Esophagus muscularis mucosa (tissue), 4 donors: ENCODE measurements at regions of chr9 and their contacts with region 1.

Region 1: DNA sequence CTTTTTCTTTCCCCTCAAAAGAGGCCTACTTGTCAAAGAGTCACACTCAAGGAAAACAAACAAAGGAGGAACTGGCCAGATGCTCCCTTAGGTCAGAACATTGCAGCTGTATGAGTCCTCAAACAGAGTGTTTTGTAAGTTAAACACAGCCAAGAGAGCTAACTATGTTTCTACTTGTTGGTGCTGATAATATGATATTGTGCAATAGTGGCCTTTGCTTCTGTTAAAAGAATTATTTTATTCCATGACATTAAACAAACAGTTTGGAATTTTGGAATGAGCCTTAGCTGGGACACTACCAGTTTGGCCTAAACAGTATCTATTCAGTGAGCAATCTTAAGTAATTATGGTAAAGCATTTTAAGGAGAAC is 56.0 kb upstream of the TPD52L3 start:
- DNase-seq: no peak
- H3K4me3 ChIP-seq: no peak overlapping the region
- H3K27ac ChIP-seq: peak overlapping the region; percentile 62 to 79 (median 77)
- H3K4me1 ChIP-seq: peaks cover 11 to 32% (median 28%) of the 10 kb centered on the region in 4 donors
- H3K27me3 ChIP-seq: no peaks in the 10 kb centered on the region
- CTCF ChIP-seq: no peak
- EP300 ChIP-seq: no peak
- POLR2A ChIP-seq: no peak

Region 2: GRCh38 chr9:6215562-6215961 is 56.7 kb before region 1 on chr9 and contains the start of gene IL33:
- intact Hi-C with region 1: loop called (anchors 5 kb)
- DNase-seq: no peak
- H3K4me3 ChIP-seq: peak within 1 kb of the TSS; percentile 53 to 64 (median 56)
- H3K27ac ChIP-seq: peak within 1 kb of the TSS; percentile 81 to 87 (median 83)
- H3K4me1 ChIP-seq: peaks cover 16 to 59% (median 40%) of the 10 kb centered on the region in 4 donors
- H3K27me3 ChIP-seq: no peaks in the 10 kb centered on the region
- CTCF ChIP-seq: no peak
- EP300 ChIP-seq: no peak
- POLR2A ChIP-seq: no peak
- total RNA-seq, gene IL33: 63.1 to 178 (median 104) TPM